Naive thymus-derived CD4-positive, alpha-beta T cell (primary cell): ENCODE measurements at regions of chr12 and their contacts with region 1.

Region 1: DNA sequence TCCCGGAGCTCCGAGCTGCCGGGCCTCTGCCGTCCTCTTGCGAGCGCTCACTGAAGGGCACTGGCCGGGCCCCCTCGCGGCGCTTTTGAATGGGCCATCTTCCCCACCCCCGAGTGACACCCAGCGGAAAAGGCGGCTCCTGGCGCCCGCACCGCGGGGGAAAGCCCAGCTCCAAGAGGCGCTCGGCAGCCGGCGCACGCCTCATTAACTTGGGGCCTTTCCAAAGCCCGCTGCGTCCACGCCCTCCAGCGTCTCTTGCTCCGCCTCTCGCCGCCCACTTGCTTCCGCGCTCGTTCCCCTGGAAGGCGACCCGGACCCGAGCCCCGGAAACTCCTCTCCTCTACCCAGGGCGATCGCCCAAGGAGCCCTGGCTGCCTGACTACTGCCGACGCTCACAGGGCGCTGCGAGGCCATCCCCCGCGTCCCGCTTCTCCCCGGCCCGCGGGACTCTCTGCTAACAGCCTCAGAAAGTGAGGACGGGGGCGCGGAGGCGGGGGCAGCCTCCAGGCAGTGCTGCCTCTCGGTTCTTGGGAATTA is at the start of gene PHLDA1:
- DNase-seq: peak; percentile 56 to 97 (median 69)
- ATAC-seq: peak; percentile 91
- H3K4me3 ChIP-seq: peak within 1 kb of the TSS; percentile 76
- H3K4me3 Mint-ChIP-seq: peak within 1 kb of the TSS; percentile 85 to 98 (median 93)
- H3K27ac ChIP-seq: peak within 1 kb of the TSS; percentile 74
- H3K27ac Mint-ChIP-seq: peak within 1 kb of the TSS; percentile 74 to 98 (median 82)
- H3K4me1 ChIP-seq: peaks cover 5% of the 10 kb centered on the region in 2 donors
- H3K4me1 Mint-ChIP-seq: peaks cover 5 to 57% (median 23%) of the 10 kb centered on the region in 7 donors
- H3K27me3 ChIP-seq: no peaks in the 10 kb centered on the region
- H3K27me3 Mint-ChIP-seq: peaks cover 0 to 5% (median 0%) of the 10 kb centered on the region in 5 donors
- total RNA-seq, gene PHLDA1: 1.1 to 25.1 (median 4.6) TPM

Region 2: DNA sequence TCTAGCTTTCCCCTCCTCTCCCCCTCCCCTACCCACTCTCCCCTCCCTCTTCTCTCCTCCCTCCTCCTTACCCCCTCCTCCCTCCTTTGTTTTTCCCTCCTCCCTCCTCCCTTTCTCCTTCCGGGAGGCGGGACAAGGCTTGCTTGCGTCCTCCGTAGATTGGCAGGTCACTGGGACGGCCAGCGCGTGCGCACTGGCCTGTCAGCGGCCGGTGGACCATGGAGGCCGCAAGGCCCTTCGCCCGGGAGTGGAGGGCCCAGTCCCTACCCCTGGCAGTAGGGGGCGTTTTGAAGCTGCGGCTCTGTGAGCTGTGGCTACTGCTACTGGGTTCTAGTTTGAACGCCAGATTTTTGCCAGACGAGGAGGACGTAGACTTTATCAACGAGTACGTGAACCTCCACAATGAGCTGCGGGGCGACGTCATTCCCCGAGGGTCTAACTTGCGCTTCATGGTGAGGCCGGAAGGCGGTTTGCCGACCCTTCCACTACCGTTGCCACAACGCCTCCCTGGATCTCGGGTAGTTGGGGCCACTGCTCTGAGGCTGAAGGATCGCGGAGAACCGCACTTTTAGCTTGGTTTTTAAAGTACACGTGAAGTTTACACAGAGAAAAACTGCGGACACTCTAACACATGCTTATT is 640.6 kb before region 1 on chr12 and contains the start of gene GLIPR1L2:
- CTCF ChIA-PET with region 1: no interaction called
- POLR2A ChIA-PET with region 1: interaction called, 3 read pairs
- intact Hi-C with region 1: loop called (anchors 2 kb)
- DNase-seq: peak; percentile 75 to 86 (median 80)
- ATAC-seq: peak; percentile 96
- H3K4me3 ChIP-seq: peak within 1 kb of the TSS; percentile 67
- H3K4me3 Mint-ChIP-seq: peak within 1 kb of the TSS; percentile 87 to 98 (median 94)
- H3K27ac ChIP-seq: peak within 1 kb of the TSS; percentile 79
- H3K27ac Mint-ChIP-seq: peak within 1 kb of the TSS; percentile 93 to 99 (median 98)
- H3K4me1 ChIP-seq: peaks cover 14 to 19% of the 10 kb centered on the region in 2 donors
- H3K4me1 Mint-ChIP-seq: peaks cover 26 to 61% (median 44%) of the 10 kb centered on the region in 7 donors
- H3K27me3 ChIP-seq: no peaks in the 10 kb centered on the region
- H3K27me3 Mint-ChIP-seq: peaks cover 0 to 3% (median 0%) of the 10 kb centered on the region in 5 donors
- total RNA-seq, gene GLIPR1L2: 0.22 to 2.3 (median 0.38) TPM

Region 3: DNA sequence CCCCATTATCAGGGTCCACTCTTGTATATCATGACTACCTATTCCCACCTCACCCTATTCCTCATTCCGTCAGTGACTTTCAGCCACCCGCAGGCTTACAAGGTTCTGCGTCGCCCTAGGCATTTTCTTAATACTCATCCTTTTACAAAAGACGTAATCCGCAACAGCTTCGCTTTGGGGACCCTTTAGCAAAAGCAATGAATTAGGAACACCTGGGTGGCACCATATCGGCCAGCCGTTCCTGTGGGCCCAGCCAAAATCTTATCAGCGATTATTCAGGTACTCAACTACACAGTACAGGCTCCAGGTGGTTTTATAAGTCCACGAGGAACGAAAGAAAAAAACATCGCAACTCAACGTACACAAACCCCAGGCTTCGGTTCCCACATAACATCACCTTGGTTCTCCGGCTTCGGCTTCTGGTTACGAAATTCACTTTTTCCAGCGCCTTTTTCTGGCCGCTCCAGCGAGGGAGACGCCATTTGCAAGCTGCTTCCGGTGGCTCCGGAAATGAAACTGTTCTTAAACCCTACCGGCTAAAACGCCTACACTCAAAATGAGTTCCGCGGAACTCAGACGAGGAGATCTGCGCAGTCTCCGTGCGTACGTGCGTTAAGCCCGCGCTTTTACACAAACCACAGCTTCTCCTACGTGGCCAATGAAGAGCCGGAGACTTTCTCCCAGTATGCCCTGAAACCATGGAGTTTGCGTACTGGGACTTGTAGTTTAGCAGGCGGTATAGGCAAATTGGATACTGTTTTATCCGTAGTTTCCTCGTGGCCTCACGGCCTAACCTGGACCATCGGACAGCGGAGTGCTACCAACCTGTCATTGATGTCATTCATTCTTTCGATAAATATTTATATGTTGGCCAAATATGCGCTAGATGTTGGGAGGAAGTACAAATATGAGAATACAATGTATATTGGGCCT is 520.2 kb before region 1 on chr12 and contains the start of gene KRR1:
- CTCF ChIA-PET with region 1: interaction called, 4 read pairs
- POLR2A ChIA-PET with region 1: interaction called, 8 read pairs
- intact Hi-C with region 1: loop called (anchors 1 kb)
- DNase-seq: peak; percentile 60 to 93 (median 90)
- ATAC-seq: peak; percentile 98
- H3K4me3 ChIP-seq: peak within 1 kb of the TSS; percentile 90
- H3K4me3 Mint-ChIP-seq: peak within 1 kb of the TSS; percentile 96 to 100 (median 99)
- H3K27ac ChIP-seq: peak within 1 kb of the TSS; percentile 89
- H3K27ac Mint-ChIP-seq: peak within 1 kb of the TSS; percentile 96 to 100 (median 99)
- H3K4me1 ChIP-seq: peaks cover 13% of the 10 kb centered on the region in 2 donors
- H3K4me1 Mint-ChIP-seq: peaks cover 15 to 47% (median 38%) of the 10 kb centered on the region in 7 donors
- H3K27me3 ChIP-seq: no peaks in the 10 kb centered on the region
- H3K27me3 Mint-ChIP-seq: no peaks in the 10 kb centered on the region
- total RNA-seq, gene KRR1: 69.3 to 120 (median 74.3) TPM

Region 4: GRCh38 chr12:75814851-75815754 is 216.5 kb before region 1 on chr12:
- CTCF ChIA-PET with region 1: interaction called, 5 read pairs
- POLR2A ChIA-PET with region 1: no interaction called
- intact Hi-C with region 1: loop called in 1 of 2 experiments (anchors 1 kb)
- DNase-seq: peak in 1 of 9 donors; percentile 5
- ATAC-seq: peak; percentile 34
- H3K4me3 ChIP-seq: no peak overlapping the region
- H3K4me3 Mint-ChIP-seq: no peak overlapping the region
- H3K27ac ChIP-seq: no peak overlapping the region
- H3K27ac Mint-ChIP-seq: no peak overlapping the region
- H3K4me1 ChIP-seq: peaks cover 0 to 7% of the 10 kb centered on the region in 2 donors
- H3K4me1 Mint-ChIP-seq: peaks cover 0 to 18% (median 0%) of the 10 kb centered on the region in 7 donors
- H3K27me3 ChIP-seq: no peaks in the 10 kb centered on the region
- H3K27me3 Mint-ChIP-seq: peaks cover 0 to 7% (median 5%) of the 10 kb centered on the region in 5 donors

Region 5: GRCh38 chr12:75944097-75944904 is 87.3 kb before region 1 on chr12:
- CTCF ChIA-PET with region 1: no interaction called
- POLR2A ChIA-PET with region 1: no interaction called
- intact Hi-C with region 1: loop called (anchors 2 to 5 kb)
- DNase-seq: peak in 1 of 9 donors; percentile 35
- ATAC-seq: peak; percentile 87
- H3K4me3 ChIP-seq: no peak overlapping the region
- H3K4me3 Mint-ChIP-seq: peak overlapping the region in 2 of 10 donors; percentile 61 to 83
- H3K27ac ChIP-seq: no peak overlapping the region
- H3K27ac Mint-ChIP-seq: peak overlapping the region in 5 of 9 donors; percentile 40 to 97 (median 74)
- H3K4me1 ChIP-seq: peaks cover 0 to 16% of the 10 kb centered on the region in 2 donors
- H3K4me1 Mint-ChIP-seq: peaks cover 7 to 28% (median 11%) of the 10 kb centered on the region in 7 donors
- H3K27me3 ChIP-seq: no peaks in the 10 kb centered on the region
- H3K27me3 Mint-ChIP-seq: no peaks in the 10 kb centered on the region

Region 6: GRCh38 chr12:75996861-75997447 is 34.7 kb before region 1 on chr12:
- CTCF ChIA-PET with region 1: no interaction called
- POLR2A ChIA-PET with region 1: no interaction called
- intact Hi-C with region 1: no loop called
- DNase-seq: no peak
- ATAC-seq: no peak
- H3K4me3 ChIP-seq: no peak overlapping the region
- H3K4me3 Mint-ChIP-seq: no peak overlapping the region
- H3K27ac ChIP-seq: no peak overlapping the region
- H3K27ac Mint-ChIP-seq: no peak overlapping the region
- H3K4me1 ChIP-seq: no peaks in the 10 kb centered on the region
- H3K4me1 Mint-ChIP-seq: peaks cover 0 to 18% (median 0%) of the 10 kb centered on the region in 7 donors
- H3K27me3 ChIP-seq: no peaks in the 10 kb centered on the region
- H3K27me3 Mint-ChIP-seq: no peaks in the 10 kb centered on the region

Region 7: DNA sequence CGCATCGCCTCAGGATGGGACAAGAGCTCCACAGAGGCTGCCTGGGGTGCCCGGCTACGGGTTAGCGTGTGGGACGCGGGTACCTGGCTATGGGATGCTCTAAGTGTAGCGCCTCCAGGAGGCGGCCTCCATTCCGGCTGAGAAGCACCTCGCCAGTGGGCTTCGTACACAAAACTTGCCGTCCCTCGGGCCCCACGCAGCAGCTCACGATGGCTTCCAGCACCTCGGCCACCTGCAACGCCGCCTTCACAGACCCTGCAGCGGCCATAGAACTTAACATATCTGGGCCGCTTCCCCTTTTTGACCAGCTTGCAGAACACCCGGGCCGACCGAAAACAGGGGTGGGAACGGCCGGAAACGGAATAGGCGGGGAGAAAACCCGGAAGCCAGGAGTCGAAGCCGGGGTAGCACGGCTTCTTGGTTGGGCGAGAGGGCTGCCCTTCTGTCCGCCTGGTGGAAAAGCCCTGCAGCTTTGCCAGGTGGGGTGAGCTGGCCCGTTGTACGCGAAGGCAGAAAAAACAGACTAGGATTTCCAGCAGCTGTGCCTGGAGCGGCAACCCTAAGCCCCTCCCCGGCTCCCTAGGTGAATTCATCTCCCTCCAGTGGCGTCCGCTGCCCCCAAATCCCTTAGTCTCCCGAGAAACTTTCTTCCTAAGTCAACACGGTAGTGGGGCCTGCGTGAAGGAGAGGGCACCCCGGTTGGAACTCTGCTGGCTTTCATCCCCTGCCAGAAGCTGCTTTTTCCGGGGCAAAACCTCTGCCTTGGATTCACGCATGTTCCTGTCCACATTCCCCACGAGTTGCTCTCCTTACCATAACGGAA is 316.7 kb after region 1 on chr12 and contains the start of gene BBS10:
- CTCF ChIA-PET with region 1: interaction called, 3 read pairs
- POLR2A ChIA-PET with region 1: no interaction called
- intact Hi-C with region 1: loop called in 1 of 2 experiments (anchors 5 kb)
- DNase-seq: peak; percentile 64 to 86 (median 84)
- ATAC-seq: peak; percentile 97
- H3K4me3 ChIP-seq: peak within 1 kb of the TSS; percentile 88
- H3K4me3 Mint-ChIP-seq: peak within 1 kb of the TSS; percentile 89 to 98 (median 96)
- H3K27ac ChIP-seq: peak within 1 kb of the TSS; percentile 79
- H3K27ac Mint-ChIP-seq: peak within 1 kb of the TSS; percentile 85 to 95 (median 93)
- H3K4me1 ChIP-seq: peaks cover 16 to 20% of the 10 kb centered on the region in 2 donors
- H3K4me1 Mint-ChIP-seq: peaks cover 15 to 48% (median 30%) of the 10 kb centered on the region in 7 donors
- H3K27me3 ChIP-seq: no peaks in the 10 kb centered on the region
- H3K27me3 Mint-ChIP-seq: no peaks in the 10 kb centered on the region
- total RNA-seq, gene BBS10: 2.5 to 11.5 (median 5.2) TPM